CD8-positive, alpha-beta memory T cell (primary cell): ENCODE measurements at regions of chr10 and their contacts with region 1.

Region 1: DNA sequence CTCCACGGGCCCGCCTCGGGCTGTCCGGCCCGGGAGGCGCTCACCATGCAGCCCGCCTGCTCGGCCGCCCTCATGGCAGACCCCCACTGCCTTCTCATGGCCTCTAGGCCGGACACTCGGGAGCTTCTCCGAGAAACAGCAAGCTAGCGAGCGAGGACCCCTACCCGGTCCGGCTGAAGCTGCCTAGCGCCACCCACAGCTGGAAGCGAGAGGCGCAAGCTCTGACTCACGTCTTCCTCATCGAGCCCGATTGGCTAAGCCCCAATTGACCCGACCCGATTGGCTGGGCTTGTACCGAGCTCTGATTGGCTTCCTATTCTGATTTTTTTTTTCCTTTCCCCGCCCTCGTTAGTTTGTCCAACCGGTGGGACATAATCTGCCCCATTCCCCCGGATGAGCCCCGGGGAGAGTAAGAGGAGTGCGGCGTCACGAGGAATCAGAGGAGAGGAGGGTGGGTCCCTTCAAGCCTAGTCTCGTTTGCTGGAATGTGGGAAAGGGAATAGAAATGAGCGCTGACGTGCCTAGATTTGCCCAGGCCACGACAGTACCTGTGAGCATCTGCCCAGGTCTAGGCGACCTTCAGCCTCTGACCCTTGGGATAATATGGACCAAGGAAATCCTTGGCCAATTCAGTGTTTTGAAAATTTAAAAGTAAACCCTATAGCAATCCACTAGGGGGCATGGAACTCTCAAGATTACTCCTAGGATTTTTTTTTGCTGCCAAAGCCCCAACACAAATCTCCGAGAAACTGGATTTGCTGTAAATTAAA is at the start of gene TYSND1:
- DNase-seq: peak; percentile 87 to 94 (median 91)
- H3K4me3 ChIP-seq: peak within 1 kb of the TSS; percentile 76
- H3K4me3 Mint-ChIP-seq: peak within 1 kb of the TSS; percentile 88 to 95 (median 91)
- H3K27ac ChIP-seq: peak within 1 kb of the TSS; percentile 91
- H3K27ac Mint-ChIP-seq: peak within 1 kb of the TSS; percentile 90 to 99 (median 95)
- H3K4me1 ChIP-seq: peaks cover 30% of the 10 kb centered on the region
- H3K4me1 Mint-ChIP-seq: peaks cover 31 to 63% (median 38%) of the 10 kb centered on the region in 3 donors
- H3K27me3 ChIP-seq: no peaks in the 10 kb centered on the region
- H3K27me3 Mint-ChIP-seq: no peaks in the 10 kb centered on the region
- total RNA-seq, gene TYSND1: 14.7 to 16.3 TPM

Region 2: GRCh38 chr10:69994262-69994661 is 152.4 kb before region 1 on chr10:
- CTCF ChIA-PET with region 1: no interaction called
- POLR2A ChIA-PET with region 1: no interaction called
- DNase-seq: no peak
- H3K4me3 ChIP-seq: no peak overlapping the region
- H3K4me3 Mint-ChIP-seq: no peak overlapping the region
- H3K27ac ChIP-seq: no peak overlapping the region
- H3K27ac Mint-ChIP-seq: no peak overlapping the region
- H3K4me1 ChIP-seq: no peaks in the 10 kb centered on the region
- H3K4me1 Mint-ChIP-seq: peaks cover 0 to 3% (median 3%) of the 10 kb centered on the region in 3 donors
- H3K27me3 ChIP-seq: no peaks in the 10 kb centered on the region
- H3K27me3 Mint-ChIP-seq: peaks cover 6 to 19% of the 10 kb centered on the region in 2 donors

Region 3: GRCh38 chr10:70093335-70093944 is 53.2 kb before region 1 on chr10:
- CTCF ChIA-PET with region 1: interaction called, 34 read pairs
- POLR2A ChIA-PET with region 1: interaction called, 11 read pairs
- DNase-seq: peak in 2 of 5 donors; percentile 47 to 52
- H3K4me3 ChIP-seq: peak overlapping the region; percentile 53
- H3K4me3 Mint-ChIP-seq: peak overlapping the region; percentile 74 to 97 (median 84)
- H3K27ac ChIP-seq: no peak overlapping the region
- H3K27ac Mint-ChIP-seq: peak overlapping the region; percentile 90 to 100 (median 96)
- H3K4me1 ChIP-seq: peaks cover 32% of the 10 kb centered on the region
- H3K4me1 Mint-ChIP-seq: peaks cover 42 to 63% (median 52%) of the 10 kb centered on the region in 3 donors
- H3K27me3 ChIP-seq: no peaks in the 10 kb centered on the region
- H3K27me3 Mint-ChIP-seq: no peaks in the 10 kb centered on the region

Region 4: DNA sequence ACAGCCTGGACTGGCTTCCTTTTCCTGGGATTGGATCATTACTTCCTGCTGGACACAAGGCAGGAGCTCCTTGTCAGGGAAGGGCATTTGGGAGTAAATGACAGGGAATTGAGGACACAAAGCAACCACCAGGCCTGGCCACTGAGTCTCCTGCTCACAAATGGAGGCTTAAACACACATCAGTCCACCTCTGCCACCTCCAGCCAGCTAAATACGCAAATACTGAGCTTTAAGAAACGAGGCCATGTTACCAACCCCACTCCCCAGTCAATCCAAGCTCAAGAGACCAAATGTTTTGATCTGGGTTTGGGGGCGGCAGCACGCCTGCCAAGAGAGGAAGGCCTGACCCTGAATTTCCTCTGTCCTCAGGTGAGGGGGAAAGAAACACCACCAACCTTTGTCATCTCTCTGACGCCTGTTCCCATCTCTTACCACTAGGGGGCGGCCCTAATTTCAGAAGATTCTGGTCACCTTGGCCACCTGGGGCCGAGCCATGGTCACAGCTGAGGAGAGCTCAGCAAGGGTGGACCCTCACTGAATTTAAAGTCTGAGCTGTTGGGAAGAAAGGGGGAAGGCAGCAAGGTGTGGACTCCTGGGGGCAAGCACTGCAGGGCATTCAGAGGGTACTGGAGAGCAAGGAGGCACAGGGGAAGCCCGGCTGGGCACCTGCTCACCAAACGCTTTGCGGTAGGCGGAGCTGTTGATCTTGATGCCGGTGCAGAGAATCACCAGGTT is 30.6 kb before region 1 on chr10:
- CTCF ChIA-PET with region 1: interaction called, 44 read pairs
- POLR2A ChIA-PET with region 1: interaction called, 11 read pairs
- DNase-seq: peak; percentile 40 to 75 (median 42)
- H3K4me3 ChIP-seq: no peak overlapping the region
- H3K4me3 Mint-ChIP-seq: peak overlapping the region in 1 of 7 donors; percentile 39
- H3K27ac ChIP-seq: no peak overlapping the region
- H3K27ac Mint-ChIP-seq: peak overlapping the region in 3 of 8 donors; percentile 44 to 75 (median 72)
- H3K4me1 ChIP-seq: peaks cover 7% of the 10 kb centered on the region
- H3K4me1 Mint-ChIP-seq: peaks cover 5 to 9% (median 6%) of the 10 kb centered on the region in 3 donors
- H3K27me3 ChIP-seq: no peaks in the 10 kb centered on the region
- H3K27me3 Mint-ChIP-seq: no peaks in the 10 kb centered on the region

Region 5: DNA sequence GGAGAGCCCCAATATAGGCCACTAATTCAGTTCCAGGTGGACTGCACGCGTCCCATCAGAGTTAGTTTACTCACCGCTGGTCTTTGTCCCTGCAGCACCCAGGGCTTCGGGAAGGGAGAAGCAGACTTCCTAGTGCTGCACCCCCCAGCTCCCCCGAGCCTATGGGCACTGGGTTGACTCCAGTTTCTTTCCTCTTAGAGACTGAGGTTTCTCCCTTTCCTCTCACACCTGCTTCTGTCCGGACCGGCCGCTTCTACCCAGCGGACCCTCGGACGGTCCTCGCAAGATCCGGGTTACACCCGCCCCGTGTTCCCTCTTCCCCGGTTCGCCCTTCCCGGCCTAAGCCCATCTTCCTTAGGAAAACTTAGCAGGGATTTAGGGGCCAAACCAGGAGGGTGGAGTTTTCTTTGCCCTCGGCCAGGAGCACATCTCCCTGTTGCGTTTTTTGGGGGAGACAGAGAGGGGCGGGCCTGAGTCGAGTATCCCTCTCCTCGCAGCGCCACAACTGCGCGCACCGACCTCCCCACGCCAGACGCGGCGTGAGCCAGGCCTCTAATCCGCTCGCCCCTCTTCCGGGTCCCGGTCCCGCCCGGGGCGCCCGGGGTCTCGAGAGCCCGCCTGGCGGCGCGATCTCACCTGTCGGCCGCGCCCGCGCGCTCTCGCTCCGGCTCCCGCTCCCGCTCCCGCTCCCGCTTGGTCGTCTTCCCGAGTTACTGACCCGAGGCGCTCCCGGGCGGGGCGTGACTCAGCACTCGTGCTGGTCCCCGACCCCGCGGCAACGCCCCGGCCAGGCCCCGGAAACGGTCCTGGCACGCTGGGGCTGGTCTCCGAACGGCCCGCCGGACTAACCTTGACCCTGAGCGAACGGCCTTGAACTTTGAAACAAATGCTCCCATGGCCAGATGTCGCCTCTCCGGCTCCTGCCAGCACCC is 14.3 kb before region 1 on chr10 and contains the start of gene AIFM2:
- CTCF ChIA-PET with region 1: interaction called, 22 read pairs
- POLR2A ChIA-PET with region 1: interaction called, 12 read pairs
- DNase-seq: peak; percentile 22 to 73 (median 42)
- H3K4me3 ChIP-seq: peak within 1 kb of the TSS; percentile 77
- H3K4me3 Mint-ChIP-seq: peak within 1 kb of the TSS; percentile 83 to 96 (median 89)
- H3K27ac ChIP-seq: peak within 1 kb of the TSS; percentile 54
- H3K27ac Mint-ChIP-seq: peak within 1 kb of the TSS; percentile 70 to 96 (median 89)
- H3K4me1 ChIP-seq: peaks cover 11% of the 10 kb centered on the region
- H3K4me1 Mint-ChIP-seq: peaks cover 28 to 43% (median 39%) of the 10 kb centered on the region in 3 donors
- H3K27me3 ChIP-seq: no peaks in the 10 kb centered on the region
- H3K27me3 Mint-ChIP-seq: peaks cover 0 to 1% of the 10 kb centered on the region in 2 donors
- total RNA-seq, gene AIFM2: 17.6 to 17.9 TPM

Region 6: GRCh38 chr10:70169649-70170364 is 23.1 kb after region 1 on chr10:
- CTCF ChIA-PET with region 1: interaction called, 58 read pairs
- POLR2A ChIA-PET with region 1: interaction called, 59 read pairs
- DNase-seq: peak in 1 of 5 donors; percentile 12
- H3K4me3 ChIP-seq: peak overlapping the region; percentile 78
- H3K4me3 Mint-ChIP-seq: peak overlapping the region; percentile 83 to 97 (median 93)
- H3K27ac ChIP-seq: peak overlapping the region; percentile 80
- H3K27ac Mint-ChIP-seq: peak overlapping the region; percentile 94 to 98 (median 96)
- H3K4me1 ChIP-seq: peaks cover 62% of the 10 kb centered on the region
- H3K4me1 Mint-ChIP-seq: peaks cover 59 to 73% (median 72%) of the 10 kb centered on the region in 3 donors
- H3K27me3 ChIP-seq: no peaks in the 10 kb centered on the region
- H3K27me3 Mint-ChIP-seq: no peaks in the 10 kb centered on the region

Region 7: GRCh38 chr10:70221030-70221429 is 74.4 kb after region 1 on chr10:
- CTCF ChIA-PET with region 1: interaction called, 21 read pairs
- POLR2A ChIA-PET with region 1: no interaction called
- DNase-seq: no peak
- H3K4me3 ChIP-seq: no peak overlapping the region
- H3K4me3 Mint-ChIP-seq: peak overlapping the region in 1 of 7 donors; percentile 64
- H3K27ac ChIP-seq: no peak overlapping the region
- H3K27ac Mint-ChIP-seq: peak overlapping the region in 6 of 8 donors; percentile 13 to 81 (median 69)
- H3K4me1 ChIP-seq: peaks cover 4% of the 10 kb centered on the region
- H3K4me1 Mint-ChIP-seq: peaks cover 13 to 18% (median 18%) of the 10 kb centered on the region in 3 donors
- H3K27me3 ChIP-seq: no peaks in the 10 kb centered on the region
- H3K27me3 Mint-ChIP-seq: no peaks in the 10 kb centered on the region

Region 8: GRCh38 chr10:70404036-70404786 is 257.5 kb after region 1 on chr10 and contains the start of gene EIF4EBP2:
- CTCF ChIA-PET with region 1: interaction called, 3 read pairs
- POLR2A ChIA-PET with region 1: interaction called, 14 read pairs
- DNase-seq: peak; percentile 96 to 99 (median 98)
- H3K4me3 ChIP-seq: peak within 1 kb of the TSS; percentile 78
- H3K4me3 Mint-ChIP-seq: peak within 1 kb of the TSS; percentile 90 to 98 (median 97)
- H3K27ac ChIP-seq: peak within 1 kb of the TSS; percentile 71
- H3K27ac Mint-ChIP-seq: peak within 1 kb of the TSS; percentile 80 to 97 (median 95)
- H3K4me1 ChIP-seq: peaks cover 20% of the 10 kb centered on the region
- H3K4me1 Mint-ChIP-seq: peaks cover 40 to 51% (median 42%) of the 10 kb centered on the region in 3 donors
- H3K27me3 ChIP-seq: no peaks in the 10 kb centered on the region
- H3K27me3 Mint-ChIP-seq: no peaks in the 10 kb centered on the region
- total RNA-seq, gene EIF4EBP2: 44.4 to 45.8 TPM